ENCODE measurements at regions of chr17 and their contacts with region 1.

Region 1: DNA sequence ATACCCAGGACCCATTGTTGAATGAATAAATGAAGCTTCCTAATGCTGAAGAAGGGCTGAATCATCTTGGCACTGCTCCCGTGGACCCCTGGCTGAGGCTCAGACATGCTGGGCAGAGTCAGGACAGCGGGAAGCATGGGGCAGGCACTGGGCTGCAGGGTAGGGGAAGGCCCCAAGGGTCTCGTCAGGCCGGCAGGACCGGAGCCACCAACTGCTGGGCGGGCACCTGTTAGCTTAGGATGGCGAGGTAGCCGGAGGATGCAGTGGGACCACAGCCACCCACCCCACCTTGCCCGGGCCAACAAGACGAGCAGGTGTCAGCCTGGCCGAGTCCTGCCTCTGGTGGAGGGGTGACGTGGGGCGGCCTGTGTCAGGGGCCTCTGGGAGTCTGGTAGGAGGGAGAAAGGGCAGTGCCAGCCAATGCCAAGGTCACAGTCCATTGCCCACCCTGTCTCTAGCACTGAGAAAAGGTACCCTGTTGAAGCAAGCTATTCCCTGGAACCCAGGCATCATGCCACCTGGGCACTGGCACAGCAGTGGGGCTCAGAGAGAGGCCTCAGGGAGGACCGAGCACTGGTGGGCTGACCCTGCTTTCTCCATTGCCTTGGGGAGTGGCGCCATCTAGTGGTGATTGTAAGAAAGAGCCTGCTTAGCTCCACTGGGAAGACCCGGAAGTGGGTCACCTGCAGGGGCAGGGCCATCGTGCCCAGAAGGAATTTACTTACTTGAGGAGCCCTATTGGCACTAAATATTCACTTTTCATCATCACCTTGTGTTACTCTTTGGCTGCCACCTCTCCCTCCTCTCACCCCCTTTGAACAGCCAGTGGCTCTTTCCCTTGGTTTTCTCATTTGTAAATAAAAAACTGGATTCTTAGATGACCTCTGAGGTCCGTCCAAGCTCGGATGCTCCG is 3.0 kb upstream of the DLX3 start:
- DNase-seq: peak; percentile 90
- H3K4me3 Mint-ChIP-seq: no peak overlapping the region
- H3K27ac Mint-ChIP-seq: no peak overlapping the region
- H3K4me1 Mint-ChIP-seq: peaks cover 27% of the 10 kb centered on the region
- H3K27me3 Mint-ChIP-seq: peaks cover 96% of the 10 kb centered on the region

Region 2: GRCh38 chr17:49861150-49861892 is 136.7 kb before region 1 on chr17:
- CTCF ChIA-PET with region 1: interaction called, 77 read pairs
- DNase-seq: peak; percentile 60
- H3K4me3 Mint-ChIP-seq: no peak overlapping the region
- H3K27ac Mint-ChIP-seq: no peak overlapping the region
- H3K4me1 Mint-ChIP-seq: no peaks in the 10 kb centered on the region
- H3K27me3 Mint-ChIP-seq: peaks cover 39% of the 10 kb centered on the region

Region 3: DNA sequence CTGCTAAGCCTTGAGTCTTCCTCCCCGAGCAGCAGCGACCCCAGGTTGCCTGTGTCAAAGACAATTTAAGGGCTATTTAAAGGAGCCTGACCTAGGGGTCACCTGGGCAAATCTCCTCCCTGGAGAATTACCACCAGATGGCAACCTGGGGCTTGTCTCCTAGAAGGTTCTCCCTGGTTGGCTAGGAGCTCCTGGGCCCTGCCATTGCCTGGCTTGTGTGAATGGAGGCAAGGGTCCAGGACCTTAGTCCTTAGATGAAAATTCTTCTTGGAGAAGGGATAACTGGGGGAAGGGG is 98.9 kb before region 1 on chr17:
- CTCF ChIA-PET with region 1: interaction called, 11 read pairs
- DNase-seq: no peak
- H3K4me3 Mint-ChIP-seq: no peak overlapping the region
- H3K27ac Mint-ChIP-seq: no peak overlapping the region
- H3K4me1 Mint-ChIP-seq: no peaks in the 10 kb centered on the region
- H3K27me3 Mint-ChIP-seq: peaks cover 95% of the 10 kb centered on the region

Region 4: GRCh38 chr17:49944273-49944890 is 53.7 kb before region 1 on chr17:
- CTCF ChIA-PET with region 1: interaction called, 118 read pairs
- DNase-seq: no peak
- H3K4me3 Mint-ChIP-seq: no peak overlapping the region
- H3K27ac Mint-ChIP-seq: no peak overlapping the region
- H3K4me1 Mint-ChIP-seq: no peaks in the 10 kb centered on the region
- H3K27me3 Mint-ChIP-seq: peaks cover 91% of the 10 kb centered on the region

Region 5: DNA sequence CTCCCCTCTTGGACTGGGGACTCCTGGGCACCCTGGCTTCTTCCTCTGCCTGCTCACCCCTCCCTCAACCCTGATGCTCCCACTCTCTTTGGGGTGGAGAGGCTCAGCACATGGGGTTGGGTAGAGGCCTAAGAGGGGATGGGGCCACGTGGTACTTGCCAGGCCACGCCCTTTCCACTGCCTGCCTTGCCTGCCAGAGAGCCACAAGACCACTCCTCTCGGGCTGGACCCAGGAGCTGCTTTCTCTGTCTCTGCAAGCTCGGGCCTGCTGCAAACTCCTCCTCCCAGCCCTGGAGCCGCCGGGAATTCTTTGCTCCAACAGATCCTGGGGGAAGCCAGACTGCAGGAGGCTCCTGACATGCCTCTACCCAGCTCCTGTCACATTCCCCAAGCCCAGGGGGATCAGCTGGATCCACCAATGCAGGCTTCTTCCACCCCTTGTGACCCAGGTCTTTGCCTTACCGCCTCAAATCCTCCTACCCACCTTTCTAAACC is 17.3 kb before region 1 on chr17:
- CTCF ChIA-PET with region 1: interaction called, 18 read pairs
- DNase-seq: no peak
- H3K4me3 Mint-ChIP-seq: no peak overlapping the region
- H3K27ac Mint-ChIP-seq: no peak overlapping the region
- H3K4me1 Mint-ChIP-seq: no peaks in the 10 kb centered on the region
- H3K27me3 Mint-ChIP-seq: peaks cover 88% of the 10 kb centered on the region

Region 6: DNA sequence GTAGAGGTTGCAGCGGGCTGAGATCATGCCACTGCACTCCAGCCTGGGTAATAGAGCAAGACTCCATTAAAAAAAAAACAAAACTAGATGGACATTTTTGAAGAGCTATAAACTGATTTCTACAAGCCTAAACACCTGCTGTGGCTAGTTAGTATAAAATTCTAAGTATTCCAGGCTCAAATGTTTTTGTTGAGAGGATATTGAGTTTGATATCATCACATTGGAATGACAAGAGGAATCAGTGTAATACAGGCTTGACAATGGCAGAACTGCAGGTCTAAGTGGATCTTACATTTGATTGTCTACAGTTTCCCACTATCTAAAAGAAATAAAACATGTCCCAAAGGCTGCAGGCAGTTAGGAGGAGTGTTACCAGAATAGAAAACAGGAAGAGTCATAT is 20.9 kb after region 1 on chr17:
- CTCF ChIA-PET with region 1: no interaction called
- DNase-seq: no peak
- H3K4me3 Mint-ChIP-seq: no peak overlapping the region
- H3K27ac Mint-ChIP-seq: no peak overlapping the region
- H3K4me1 Mint-ChIP-seq: no peaks in the 10 kb centered on the region
- H3K27me3 Mint-ChIP-seq: peaks cover 51% of the 10 kb centered on the region

Region 7: GRCh38 chr17:50087246-50087911 is 89.3 kb after region 1 on chr17:
- CTCF ChIA-PET with region 1: interaction called, 12 read pairs
- DNase-seq: peak; percentile 84
- H3K4me3 Mint-ChIP-seq: no peak overlapping the region
- H3K27ac Mint-ChIP-seq: no peak overlapping the region
- H3K4me1 Mint-ChIP-seq: no peaks in the 10 kb centered on the region
- H3K27me3 Mint-ChIP-seq: no peaks in the 10 kb centered on the region

Region 8: GRCh38 chr17:50101346-50102163 is 103.5 kb after region 1 on chr17:
- CTCF ChIA-PET with region 1: no interaction called
- DNase-seq: no peak
- H3K4me3 Mint-ChIP-seq: no peak overlapping the region
- H3K27ac Mint-ChIP-seq: no peak overlapping the region
- H3K4me1 Mint-ChIP-seq: peaks cover 8% of the 10 kb centered on the region
- H3K27me3 Mint-ChIP-seq: no peaks in the 10 kb centered on the region

Region 9: GRCh38 chr17:50161023-50161910 is 163.2 kb after region 1 on chr17:
- CTCF ChIA-PET with region 1: no interaction called
- DNase-seq: peak; percentile 95
- H3K4me3 Mint-ChIP-seq: peak overlapping the region; percentile 67
- H3K27ac Mint-ChIP-seq: peak overlapping the region; percentile 83
- H3K4me1 Mint-ChIP-seq: peaks cover 48% of the 10 kb centered on the region
- H3K27me3 Mint-ChIP-seq: peaks cover 24% of the 10 kb centered on the region

Measured in activated naive CD4-positive, alpha-beta T cell treated with anti-CD3 and anti-CD28 coated beads, Interleukin-2, amount 10 ng/mL, durations not matched to agents 7 days and 5 days (primary cell).